CD4-positive, alpha-beta memory T cell (primary cell): ENCODE measurements at regions of chr1 and their contacts with region 1.

Region 1: GRCh38 chr1:36463803-36464604 is at the start of gene MRPS15:
- DNase-seq: peak; percentile 91 to 95 (median 92)
- H3K4me3 ChIP-seq: peak within 1 kb of the TSS; percentile 83 to 87
- H3K4me3 Mint-ChIP-seq: peak within 1 kb of the TSS; percentile 96 to 99 (median 98)
- H3K27ac ChIP-seq: peak within 1 kb of the TSS; percentile 80
- H3K27ac Mint-ChIP-seq: peak within 1 kb of the TSS; percentile 95 to 98 (median 97)
- H3K4me1 ChIP-seq: peaks cover 23% of the 10 kb centered on the region
- H3K4me1 Mint-ChIP-seq: peaks cover 19 to 50% (median 31%) of the 10 kb centered on the region in 4 donors
- H3K27me3 ChIP-seq: no peaks in the 10 kb centered on the region
- H3K27me3 Mint-ChIP-seq: no peaks in the 10 kb centered on the region
- total RNA-seq, gene MRPS15: 32.5 to 33.9 TPM

Region 2: GRCh38 chr1:36088575-36089443 is 375.2 kb before region 1 on chr1 and contains the start of gene ADPRS:
- CTCF ChIA-PET with region 1: no interaction called
- POLR2A ChIA-PET with region 1: no interaction called
- intact Hi-C with region 1: loop called (anchors 2 kb)
- DNase-seq: peak; percentile 88 to 91 (median 89)
- H3K4me3 ChIP-seq: peak within 1 kb of the TSS; percentile 29 to 87
- H3K4me3 Mint-ChIP-seq: peak within 1 kb of the TSS; percentile 87 to 98 (median 92)
- H3K27ac ChIP-seq: peak within 1 kb of the TSS; percentile 92
- H3K27ac Mint-ChIP-seq: peak within 1 kb of the TSS; percentile 88 to 99 (median 96)
- H3K4me1 ChIP-seq: peaks cover 18% of the 10 kb centered on the region
- H3K4me1 Mint-ChIP-seq: peaks cover 11 to 38% (median 15%) of the 10 kb centered on the region in 4 donors
- H3K27me3 ChIP-seq: no peaks in the 10 kb centered on the region
- H3K27me3 Mint-ChIP-seq: peaks cover 6 to 14% of the 10 kb centered on the region in 2 donors
- total RNA-seq, gene ADPRS: 26.7 to 28.6 TPM

Region 3: DNA sequence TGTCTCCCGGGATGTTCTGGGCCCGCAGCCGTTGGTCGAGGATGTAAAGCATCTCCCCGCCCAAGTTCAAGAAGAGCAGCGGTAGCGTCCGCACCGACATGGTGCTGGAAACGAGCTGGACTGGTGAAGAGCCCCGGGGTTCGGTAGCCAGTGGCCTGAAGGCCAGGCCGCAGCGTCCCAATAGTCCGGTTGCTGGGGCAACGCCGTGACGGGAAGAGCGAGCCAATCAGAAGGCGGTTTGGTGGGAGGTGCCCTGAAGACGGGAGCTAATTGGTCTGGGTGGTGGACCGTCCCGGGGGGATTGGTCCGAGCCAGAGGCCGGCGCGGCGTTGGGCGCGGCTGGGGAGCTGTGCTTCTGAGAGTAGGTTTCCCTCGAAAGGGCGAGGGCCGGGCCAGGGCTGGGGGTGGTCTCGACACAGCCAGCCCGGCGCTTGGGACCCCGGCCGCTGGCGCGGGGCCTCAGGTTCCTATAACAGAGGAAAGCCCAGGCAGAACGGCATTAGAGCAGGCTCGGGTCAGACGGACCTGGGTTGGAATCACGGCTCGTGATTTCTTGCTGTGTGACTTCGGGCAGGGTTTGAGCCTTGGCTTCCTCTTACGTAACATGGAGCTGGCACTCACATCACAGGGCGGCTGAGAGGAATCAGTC is 13.6 kb before region 1 on chr1 and contains the start of gene OSCP1:
- CTCF ChIA-PET with region 1: no interaction called
- POLR2A ChIA-PET with region 1: interaction called, 51 read pairs
- intact Hi-C with region 1: loop called (anchors 1 kb)
- DNase-seq: peak; percentile 82 to 88 (median 85)
- H3K4me3 ChIP-seq: peak within 1 kb of the TSS; percentile 42 to 91
- H3K4me3 Mint-ChIP-seq: peak within 1 kb of the TSS; percentile 89 to 98 (median 93)
- H3K27ac ChIP-seq: peak within 1 kb of the TSS; percentile 88
- H3K27ac Mint-ChIP-seq: peak within 1 kb of the TSS; percentile 96 to 99 (median 98)
- H3K4me1 ChIP-seq: peaks cover 12% of the 10 kb centered on the region
- H3K4me1 Mint-ChIP-seq: peaks cover 13 to 25% (median 16%) of the 10 kb centered on the region in 4 donors
- H3K27me3 ChIP-seq: no peaks in the 10 kb centered on the region
- H3K27me3 Mint-ChIP-seq: no peaks in the 10 kb centered on the region
- total RNA-seq, gene OSCP1: 1.4 TPM in 1 of 2 experiments, not detected in the other

Region 4: DNA sequence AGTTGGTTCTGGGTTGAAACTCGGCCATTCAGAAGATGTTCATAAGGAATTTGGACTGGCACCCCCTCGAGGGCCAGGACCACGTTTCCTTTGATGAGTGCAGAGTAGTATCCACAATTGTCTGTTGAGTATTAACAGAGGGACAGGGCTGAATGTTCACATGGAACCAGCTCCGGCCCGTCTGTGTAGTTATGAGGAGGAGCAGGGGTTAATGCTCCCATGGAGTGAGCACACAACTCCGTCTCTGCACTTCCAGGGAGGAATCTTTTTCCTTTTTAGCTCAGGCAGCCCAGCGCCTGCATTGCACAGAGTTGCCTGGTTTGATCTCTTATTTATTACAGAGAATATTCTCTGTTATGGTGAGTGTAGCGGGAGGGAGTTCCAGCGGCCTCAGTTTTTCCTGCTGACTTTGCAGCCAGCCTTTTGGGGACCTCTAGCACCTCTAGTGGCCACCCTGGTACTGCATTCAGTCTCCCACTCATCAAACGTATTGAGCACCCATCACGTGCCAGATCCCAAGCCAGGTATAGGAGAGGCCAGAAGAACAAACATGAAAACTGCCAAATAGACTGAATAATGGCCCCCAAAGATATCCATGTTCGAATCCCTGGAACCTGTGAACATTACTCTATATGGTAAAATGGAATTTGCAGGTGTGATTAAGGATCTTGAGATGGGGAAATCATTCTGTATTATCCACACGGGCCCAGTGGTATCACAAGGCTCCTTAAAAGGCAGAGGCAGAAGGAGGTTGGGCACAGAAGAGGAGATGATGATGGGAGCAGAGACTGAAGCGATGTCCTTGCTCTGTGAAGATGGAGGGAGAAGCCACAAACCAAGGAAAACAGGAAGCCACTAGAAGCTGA is 186.4 kb after region 1 on chr1:
- CTCF ChIA-PET with region 1: no interaction called
- POLR2A ChIA-PET with region 1: no interaction called
- intact Hi-C with region 1: no loop called
- DNase-seq: peak; percentile 36 to 52 (median 40)
- H3K4me3 ChIP-seq: no peak overlapping the region
- H3K4me3 Mint-ChIP-seq: no peak overlapping the region
- H3K27ac ChIP-seq: no peak overlapping the region
- H3K27ac Mint-ChIP-seq: peak overlapping the region in 1 of 7 donors; percentile 3
- H3K4me1 ChIP-seq: no peaks in the 10 kb centered on the region
- H3K4me1 Mint-ChIP-seq: peaks cover 0 to 10% (median 4%) of the 10 kb centered on the region in 4 donors
- H3K27me3 ChIP-seq: peaks cover 9% of the 10 kb centered on the region
- H3K27me3 Mint-ChIP-seq: peaks cover 23 to 40% of the 10 kb centered on the region in 2 donors